Activated CD4-positive, alpha-beta T cell treated with anti-CD3 and anti-CD28 coated beads for 36 hours (primary cell): ENCODE measurements at regions of chr10 and their contacts with region 1.

Region 1: DNA sequence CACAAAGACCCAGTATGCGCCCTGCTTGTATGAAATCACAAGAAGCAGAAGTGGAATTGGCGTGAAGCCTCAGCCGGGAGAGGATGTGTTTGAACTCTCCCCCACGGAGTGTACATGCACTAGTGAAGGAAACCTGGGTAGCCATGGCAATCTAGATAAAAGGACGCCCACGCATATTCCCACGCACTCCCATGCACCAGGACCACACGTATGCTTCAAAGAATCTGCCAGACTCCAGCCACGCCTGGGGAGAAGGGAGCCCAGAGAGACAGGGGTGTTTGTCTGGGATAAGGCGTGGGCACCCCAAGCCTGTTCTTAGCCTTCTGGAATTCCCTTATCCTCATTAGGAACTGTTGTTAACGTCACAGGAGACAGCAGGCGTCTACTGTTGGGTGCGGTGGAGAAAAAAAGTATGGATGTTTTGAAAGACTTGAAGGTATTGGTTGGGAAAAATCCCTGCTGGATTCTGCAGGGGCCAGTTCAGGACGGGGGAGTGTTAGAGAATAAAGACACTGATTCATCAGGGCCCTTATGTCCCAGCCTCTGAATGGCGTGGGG is 28.9 kb upstream of the ECHDC3 start:
- DNase-seq: no peak
- ATAC-seq: no peak
- H3K4me3 Mint-ChIP-seq: no peak overlapping the region
- H3K27ac Mint-ChIP-seq: no peak overlapping the region
- H3K4me1 Mint-ChIP-seq: peaks cover 28% of the 10 kb centered on the region
- H3K27me3 Mint-ChIP-seq: peaks cover 51% of the 10 kb centered on the region

Region 2: GRCh38 chr10:11631890-11632587 is 81.2 kb before region 1 on chr10:
- CTCF ChIA-PET with region 1: no interaction called
- POLR2A ChIA-PET with region 1: interaction called, 3 read pairs
- intact Hi-C with region 1: loop called in 1 of 2 experiments (anchors 5 kb)
- DNase-seq: peak; percentile 63
- ATAC-seq: peak; percentile 99
- H3K4me3 Mint-ChIP-seq: no peak overlapping the region
- H3K27ac Mint-ChIP-seq: no peak overlapping the region
- H3K4me1 Mint-ChIP-seq: peaks cover 14% of the 10 kb centered on the region
- H3K27me3 Mint-ChIP-seq: peaks cover 5% of the 10 kb centered on the region

Region 3: DNA sequence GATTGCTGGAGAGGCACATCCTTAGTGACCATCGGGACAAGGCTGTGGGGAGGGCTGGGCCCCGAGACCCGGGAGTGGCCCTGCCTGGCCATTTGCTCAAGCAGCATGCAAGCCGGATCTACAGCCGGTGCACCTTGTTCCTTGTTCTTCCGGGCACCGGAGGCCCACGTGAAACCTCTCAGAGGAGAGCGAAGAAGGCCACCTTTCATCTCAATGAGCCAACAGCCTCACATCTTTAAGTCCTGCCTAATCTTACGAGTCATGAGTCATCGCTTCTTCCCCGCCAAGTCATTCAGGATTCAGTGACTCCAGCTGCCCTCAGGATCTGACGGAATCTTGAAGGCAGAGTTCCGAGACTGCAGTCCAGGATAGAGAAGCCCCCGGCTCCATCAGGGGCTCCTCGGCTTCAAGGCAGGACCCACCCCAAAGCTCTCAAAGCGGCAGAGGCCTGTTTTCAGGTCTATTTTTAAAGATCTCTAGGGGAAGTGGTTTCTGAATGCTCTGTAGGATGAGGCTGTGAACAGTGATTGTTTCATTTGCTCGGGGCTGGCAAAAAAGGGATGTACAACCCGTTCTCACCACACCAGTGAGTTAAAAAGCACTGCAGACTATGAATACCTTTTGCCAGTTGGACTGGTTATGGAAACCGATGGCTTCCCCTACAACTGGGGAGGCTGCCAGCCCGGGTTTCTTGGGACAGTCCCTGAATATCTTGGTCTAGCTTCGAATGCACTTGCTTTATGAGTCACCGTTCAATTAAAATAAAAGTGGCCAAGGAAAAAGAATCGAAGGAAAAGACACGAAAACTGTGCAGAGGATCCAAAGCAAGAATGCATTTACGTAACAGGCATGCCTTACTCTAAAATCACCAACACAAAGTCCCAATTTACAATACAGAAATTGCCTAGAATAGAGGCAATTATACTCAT is 28.3 kb before region 1 on chr10:
- CTCF ChIA-PET with region 1: interaction called, 6 read pairs
- POLR2A ChIA-PET with region 1: interaction called, 3 read pairs
- intact Hi-C with region 1: loop called (anchors 1 to 2 kb)
- DNase-seq: peak; percentile 81
- ATAC-seq: peak; percentile 93
- H3K4me3 Mint-ChIP-seq: peak overlapping the region; percentile 72
- H3K27ac Mint-ChIP-seq: peak overlapping the region; percentile 94
- H3K4me1 Mint-ChIP-seq: peaks cover 49% of the 10 kb centered on the region
- H3K27me3 Mint-ChIP-seq: peaks cover 4% of the 10 kb centered on the region